ENCODE measurements at regions of chrX and their contacts with region 1.

Region 1: DNA sequence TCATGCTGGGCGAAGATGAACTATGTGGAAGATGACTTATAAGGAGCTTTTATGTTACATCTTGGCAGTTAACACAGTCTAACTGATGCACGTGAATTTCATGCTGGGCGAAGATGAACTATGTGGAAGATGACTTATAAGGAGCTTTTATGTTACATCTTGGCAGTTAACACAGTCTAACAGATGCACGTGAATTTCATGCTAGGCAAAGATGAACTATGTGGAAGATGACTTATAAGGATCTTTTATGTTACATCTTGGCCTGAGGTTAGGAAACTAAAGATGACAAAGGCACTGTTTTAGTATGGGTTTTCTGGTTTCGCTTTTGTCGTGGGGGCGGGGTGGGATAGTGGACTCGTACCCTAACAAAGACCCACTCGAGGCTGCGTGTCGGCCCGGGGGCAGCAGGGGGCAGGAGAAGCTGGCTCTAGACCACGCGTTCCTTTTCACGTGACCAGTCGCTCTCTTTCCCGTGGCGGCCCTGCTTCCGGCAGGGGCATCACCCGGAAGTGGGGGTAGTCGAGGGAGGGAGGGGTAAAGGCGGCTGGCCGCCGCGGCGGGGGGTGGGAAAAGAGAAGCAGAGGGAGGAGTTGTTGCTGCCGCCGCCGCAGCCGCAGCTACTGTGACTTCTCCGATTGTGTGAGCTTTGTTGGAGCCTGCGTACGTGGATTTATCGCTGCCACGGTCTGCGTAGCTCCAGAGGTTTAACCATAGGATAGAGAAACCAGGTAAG is at the start of gene ATP7A:
- DNase-seq: peak; percentile 87 to 94 (median 90)
- ATAC-seq: peak; percentile 96
- H3K4me3 ChIP-seq: no peak within 1 kb of the TSS
- H3K4me1 ChIP-seq: no peaks in the 10 kb centered on the region
- CTCF ChIP-seq: no peak
- total RNA-seq, gene ATP7A: 6.9 to 11.2 (median 9.7) TPM

Region 2: DNA sequence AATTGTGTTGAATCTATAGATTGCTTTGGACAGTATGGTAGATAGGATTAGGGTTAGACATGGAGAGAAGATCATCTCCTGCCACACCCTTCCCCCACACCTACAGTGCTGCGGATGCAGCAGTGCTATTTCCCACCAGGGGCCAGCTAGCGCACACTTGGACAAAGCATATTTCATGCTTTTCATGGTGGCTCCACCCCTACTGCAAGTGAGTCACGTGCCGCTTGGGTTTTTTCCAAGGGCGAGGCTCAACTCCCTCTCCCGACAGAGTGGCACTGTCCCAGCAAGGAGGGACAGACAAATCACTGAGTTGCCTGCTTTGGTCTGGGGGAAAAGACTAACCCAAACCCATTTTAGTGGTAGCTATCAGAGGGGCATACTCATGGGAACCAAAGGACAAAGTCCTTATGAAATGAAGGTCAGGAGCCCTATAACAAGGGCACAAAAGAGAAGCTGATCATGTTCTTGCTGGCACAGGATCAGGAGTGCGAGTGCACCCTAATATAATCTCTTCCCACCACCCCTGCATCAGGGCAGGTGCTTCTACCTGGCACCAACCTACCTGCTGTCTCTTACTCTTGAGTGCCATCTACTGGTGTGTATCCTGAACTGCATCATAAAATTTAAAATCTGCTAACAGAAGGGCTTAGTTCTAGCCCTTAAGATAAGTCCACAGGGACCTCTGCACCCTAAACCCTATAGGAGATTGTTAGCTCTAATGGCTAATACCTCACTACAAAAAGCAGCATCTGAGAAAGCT is 114.3 kb after region 1 on chrX:
- intact Hi-C with region 1: loop called in 1 of 2 experiments (anchors 5 kb)
- DNase-seq: peak; percentile 66 to 79 (median 77)
- ATAC-seq: peak; percentile 93
- H3K4me3 ChIP-seq: no peak overlapping the region
- H3K4me1 ChIP-seq: no peaks in the 10 kb centered on the region
- CTCF ChIP-seq: peak; percentile 30

Measured in mucosa of descending colon (tissue), 3 donors.